ENCODE measurements at regions of chr2 and their contacts with region 1.

Region 1: GRCh38 chr2:85813982-85814801 is 60.4 kb downstream of the ATOH8 start:
- DNase-seq: peak; percentile 72
- ATAC-seq: peak; percentile 90
- H3K4me3 Mint-ChIP-seq: no peak overlapping the region
- H3K27ac Mint-ChIP-seq: no peak overlapping the region
- H3K4me1 Mint-ChIP-seq: peaks cover 3% of the 10 kb centered on the region
- H3K27me3 Mint-ChIP-seq: peaks cover 22% of the 10 kb centered on the region
- CTCF ChIP-seq: peak; percentile 65

Region 2: GRCh38 chr2:84631047-84631446 is 1183.1 kb before region 1 on chr2:
- CTCF ChIA-PET with region 1: no interaction called
- POLR2A ChIA-PET with region 1: no interaction called
- intact Hi-C with region 1: no loop called
- DNase-seq: no peak
- ATAC-seq: no peak
- H3K4me3 Mint-ChIP-seq: no peak overlapping the region
- H3K27ac Mint-ChIP-seq: no peak overlapping the region
- H3K4me1 Mint-ChIP-seq: no peaks in the 10 kb centered on the region
- H3K27me3 Mint-ChIP-seq: peaks cover 2% of the 10 kb centered on the region
- CTCF ChIP-seq: no peak

Region 3: DNA sequence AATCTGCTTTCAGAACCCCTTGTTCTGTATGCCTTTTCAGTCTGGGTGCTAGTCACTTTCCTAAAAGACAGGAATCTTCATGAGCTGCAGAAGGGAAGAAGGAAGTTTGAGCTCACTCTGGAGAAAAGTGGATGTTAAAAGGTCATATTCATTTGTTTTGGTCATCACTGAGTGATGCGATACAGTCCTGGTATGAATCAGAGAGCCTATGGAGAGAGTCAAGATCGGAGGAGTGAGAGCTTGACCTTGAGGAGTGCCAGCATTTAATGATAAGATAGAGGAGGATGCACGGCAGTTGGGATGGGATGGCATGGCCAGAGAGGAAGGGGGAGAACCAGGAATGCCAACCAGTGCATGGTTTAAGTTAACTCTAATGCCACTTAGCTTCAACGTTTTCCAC is 178.6 kb before region 1 on chr2:
- CTCF ChIA-PET with region 1: interaction called, 17 read pairs
- POLR2A ChIA-PET with region 1: interaction called, 8 read pairs
- intact Hi-C with region 1: loop called (anchors 1 kb)
- DNase-seq: no peak
- ATAC-seq: no peak
- H3K4me3 Mint-ChIP-seq: no peak overlapping the region
- H3K27ac Mint-ChIP-seq: no peak overlapping the region
- H3K4me1 Mint-ChIP-seq: peaks cover 5% of the 10 kb centered on the region
- H3K27me3 Mint-ChIP-seq: no peaks in the 10 kb centered on the region
- CTCF ChIP-seq: no peak

Region 4: DNA sequence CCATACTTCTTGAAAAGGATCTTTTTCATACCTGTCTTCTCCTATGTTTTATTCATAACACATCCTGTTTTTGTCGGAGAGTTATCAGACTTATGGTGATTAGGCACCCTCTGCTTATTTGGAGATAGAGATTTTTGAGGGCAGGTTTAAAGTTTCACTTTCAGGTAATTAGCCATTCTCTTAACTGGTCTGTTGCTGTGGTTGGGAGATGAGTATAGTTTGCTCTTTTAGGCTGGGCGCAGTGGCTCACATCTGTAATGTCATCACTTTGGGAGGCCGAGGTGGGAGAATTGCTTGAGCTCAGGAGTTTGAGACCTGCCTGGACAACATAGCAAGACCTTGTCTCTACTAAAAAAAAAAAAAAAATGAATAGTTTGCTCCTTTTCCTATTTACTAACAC is 171.5 kb before region 1 on chr2:
- CTCF ChIA-PET with region 1: interaction called, 17 read pairs
- POLR2A ChIA-PET with region 1: no interaction called
- intact Hi-C with region 1: loop called (anchors 1 kb)
- DNase-seq: no peak
- ATAC-seq: no peak
- H3K4me3 Mint-ChIP-seq: no peak overlapping the region
- H3K27ac Mint-ChIP-seq: no peak overlapping the region
- H3K4me1 Mint-ChIP-seq: peaks cover 8% of the 10 kb centered on the region
- H3K27me3 Mint-ChIP-seq: no peaks in the 10 kb centered on the region
- CTCF ChIP-seq: no peak

Region 5: DNA sequence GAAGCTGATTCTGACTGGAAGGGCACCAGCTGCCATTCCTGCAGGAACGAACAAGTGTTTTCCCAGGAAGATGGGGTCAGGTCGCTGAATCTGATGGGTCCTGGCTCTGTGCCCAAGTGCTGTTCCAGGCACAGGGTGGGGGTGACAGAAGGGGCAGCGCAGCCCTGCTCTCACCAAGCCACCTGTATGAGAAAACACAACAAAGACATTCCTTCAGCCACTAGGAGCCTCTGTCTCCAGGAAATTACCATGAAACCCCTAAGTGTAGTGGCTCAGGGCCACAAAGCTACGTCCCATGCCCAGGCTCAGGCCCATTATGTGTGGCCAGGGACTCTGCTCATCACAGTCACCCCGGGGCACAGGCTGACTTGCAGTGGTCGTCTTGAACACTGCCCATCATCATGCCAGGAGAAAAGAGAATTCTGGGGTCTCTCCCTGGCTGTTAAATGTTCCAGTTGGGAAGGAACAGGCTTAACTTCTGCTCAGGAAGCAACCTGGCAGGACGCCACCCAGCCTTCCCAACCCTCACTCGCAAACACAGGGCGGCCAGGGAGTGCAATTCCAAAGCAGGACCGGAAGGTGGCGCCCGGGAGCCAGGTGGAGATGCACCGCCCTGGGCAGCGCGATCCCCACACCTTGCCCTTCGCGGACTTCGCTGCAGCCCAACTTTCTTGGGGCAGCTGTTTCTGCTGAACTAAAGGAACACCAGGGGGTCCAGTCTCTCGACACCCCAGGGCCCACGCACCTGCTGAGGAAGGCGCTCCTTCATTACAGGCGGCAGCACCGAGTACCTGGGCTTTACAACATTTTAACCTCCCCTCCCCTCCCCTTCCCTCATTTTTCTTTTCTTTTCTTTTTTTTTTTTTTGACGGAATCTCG is 135.2 kb before region 1 on chr2:
- CTCF ChIA-PET with region 1: interaction called, 5 read pairs
- POLR2A ChIA-PET with region 1: no interaction called
- intact Hi-C with region 1: loop called (anchors 1 kb)
- DNase-seq: peak; percentile 73
- ATAC-seq: peak; percentile 99
- H3K4me3 Mint-ChIP-seq: no peak overlapping the region
- H3K27ac Mint-ChIP-seq: no peak overlapping the region
- H3K4me1 Mint-ChIP-seq: no peaks in the 10 kb centered on the region
- H3K27me3 Mint-ChIP-seq: peaks cover 9% of the 10 kb centered on the region
- CTCF ChIP-seq: peak; percentile 41

Region 6: DNA sequence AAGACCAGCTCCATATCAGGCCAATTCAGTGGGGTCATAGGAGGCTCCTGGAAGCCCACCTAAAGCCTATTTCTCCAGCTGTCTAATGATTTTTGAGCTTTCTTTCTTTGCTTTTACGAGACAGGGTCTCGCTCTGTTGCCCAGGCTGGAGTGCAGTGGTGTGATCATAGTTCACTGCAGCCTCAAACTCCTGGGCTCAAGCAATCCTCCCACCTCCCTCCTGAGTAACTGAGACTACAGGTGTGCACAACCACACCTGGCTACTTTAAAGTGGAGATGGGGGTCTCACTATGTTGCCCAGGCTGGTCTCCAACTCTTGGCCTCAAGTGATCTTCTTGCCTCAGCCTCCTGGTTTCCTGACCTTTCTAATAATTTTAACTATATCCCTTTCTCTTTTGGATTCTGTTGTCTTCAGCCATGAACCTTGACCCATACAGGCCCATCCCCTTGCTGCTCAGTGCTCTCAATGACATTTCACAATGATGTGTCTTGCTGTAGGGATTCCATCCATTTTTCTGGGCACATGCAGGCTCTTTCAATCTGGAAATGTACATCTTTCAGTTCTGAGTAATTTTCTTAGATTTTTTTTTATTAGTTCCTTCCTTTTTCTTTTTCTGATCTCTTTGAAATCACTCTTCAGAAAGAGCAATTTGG is 90.4 kb before region 1 on chr2:
- CTCF ChIA-PET with region 1: interaction called, 77 read pairs
- POLR2A ChIA-PET with region 1: no interaction called
- intact Hi-C with region 1: loop called (anchors 1 kb)
- DNase-seq: no peak
- ATAC-seq: no peak
- H3K4me3 Mint-ChIP-seq: no peak overlapping the region
- H3K27ac Mint-ChIP-seq: no peak overlapping the region
- H3K4me1 Mint-ChIP-seq: peaks cover 1% of the 10 kb centered on the region
- H3K27me3 Mint-ChIP-seq: peaks cover 17% of the 10 kb centered on the region
- CTCF ChIP-seq: no peak

Region 7: GRCh38 chr2:85728883-85729824 is 85.0 kb before region 1 on chr2:
- CTCF ChIA-PET with region 1: interaction called, 77 read pairs
- POLR2A ChIA-PET with region 1: no interaction called
- intact Hi-C with region 1: loop called (anchors 1 kb)
- DNase-seq: peak; percentile 76
- ATAC-seq: peak; percentile 94
- H3K4me3 Mint-ChIP-seq: no peak overlapping the region
- H3K27ac Mint-ChIP-seq: peak overlapping the region; percentile 41
- H3K4me1 Mint-ChIP-seq: peaks cover 2% of the 10 kb centered on the region
- H3K27me3 Mint-ChIP-seq: peaks cover 18% of the 10 kb centered on the region
- CTCF ChIP-seq: peak; percentile 32

Region 8: GRCh38 chr2:85750587-85751575 is 63.3 kb before region 1 on chr2:
- CTCF ChIA-PET with region 1: interaction called, 16 read pairs
- POLR2A ChIA-PET with region 1: no interaction called
- intact Hi-C with region 1: loop called (anchors 1 kb)
- DNase-seq: no peak
- ATAC-seq: peak; percentile 56
- H3K4me3 Mint-ChIP-seq: no peak overlapping the region
- H3K27ac Mint-ChIP-seq: no peak overlapping the region
- H3K4me1 Mint-ChIP-seq: peaks cover 65% of the 10 kb centered on the region
- H3K27me3 Mint-ChIP-seq: peaks cover 19% of the 10 kb centered on the region
- CTCF ChIP-seq: no peak

Region 9: DNA sequence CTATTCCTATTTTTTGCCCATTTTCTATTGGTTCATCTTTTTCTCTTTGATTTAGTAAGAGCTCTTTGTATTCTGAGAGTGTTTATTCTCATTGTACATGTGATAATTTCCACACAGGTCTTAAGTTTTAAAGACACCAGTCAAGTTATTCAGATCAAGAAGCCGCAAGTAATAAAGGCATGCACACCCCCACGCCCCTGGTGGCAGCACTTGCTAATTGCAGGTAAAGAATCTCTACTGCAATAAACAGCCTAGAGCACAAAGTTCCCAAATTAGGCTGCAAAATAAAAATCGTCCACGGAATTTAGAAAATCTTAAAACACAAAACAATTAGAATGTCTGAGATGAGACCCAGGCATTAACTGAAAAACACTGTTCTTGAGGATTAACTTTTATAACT is 29.4 kb after region 1 on chr2:
- CTCF ChIA-PET with region 1: no interaction called
- POLR2A ChIA-PET with region 1: no interaction called
- intact Hi-C with region 1: no loop called
- DNase-seq: no peak
- ATAC-seq: no peak
- H3K4me3 Mint-ChIP-seq: no peak overlapping the region
- H3K27ac Mint-ChIP-seq: no peak overlapping the region
- H3K4me1 Mint-ChIP-seq: peaks cover 40% of the 10 kb centered on the region
- H3K27me3 Mint-ChIP-seq: no peaks in the 10 kb centered on the region
- CTCF ChIP-seq: no peak

Region 10: DNA sequence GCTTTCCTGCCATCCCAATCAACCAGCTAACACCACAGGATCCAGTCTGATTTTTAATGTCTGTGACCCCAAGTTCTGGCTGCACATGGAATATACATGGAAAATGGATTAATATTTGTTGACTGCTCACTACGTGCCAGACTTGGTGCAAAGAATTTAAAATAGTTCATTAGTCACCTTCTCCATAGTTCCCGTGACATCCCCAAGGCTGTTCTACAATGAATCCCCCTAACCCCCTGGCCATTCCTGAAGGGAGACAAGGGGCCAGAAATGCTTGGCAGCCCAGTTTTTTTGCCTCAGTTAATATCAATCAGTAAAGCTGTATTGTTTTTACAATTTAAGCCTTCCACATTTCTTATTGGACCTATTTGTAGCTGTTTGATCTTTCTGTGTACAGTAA is 145.6 kb after region 1 on chr2:
- CTCF ChIA-PET with region 1: no interaction called
- POLR2A ChIA-PET with region 1: no interaction called
- intact Hi-C with region 1: no loop called
- DNase-seq: no peak
- ATAC-seq: no peak
- H3K4me3 Mint-ChIP-seq: no peak overlapping the region
- H3K27ac Mint-ChIP-seq: no peak overlapping the region
- H3K4me1 Mint-ChIP-seq: peaks cover 2% of the 10 kb centered on the region
- H3K27me3 Mint-ChIP-seq: no peaks in the 10 kb centered on the region
- CTCF ChIP-seq: no peak

Region 11: GRCh38 chr2:85987266-85988174 is 173.3 kb after region 1 on chr2:
- CTCF ChIA-PET with region 1: no interaction called
- POLR2A ChIA-PET with region 1: no interaction called
- intact Hi-C with region 1: no loop called
- DNase-seq: no peak
- ATAC-seq: no peak
- H3K4me3 Mint-ChIP-seq: no peak overlapping the region
- H3K27ac Mint-ChIP-seq: no peak overlapping the region
- H3K4me1 Mint-ChIP-seq: peaks cover 8% of the 10 kb centered on the region
- H3K27me3 Mint-ChIP-seq: no peaks in the 10 kb centered on the region
- CTCF ChIP-seq: no peak

Measured in activated B cell treated with CpG ODN at 0.5 μM for 24 hours (primary cell).